ENCODE measurements at regions of chr2 and their contacts with region 1.

Region 1: DNA sequence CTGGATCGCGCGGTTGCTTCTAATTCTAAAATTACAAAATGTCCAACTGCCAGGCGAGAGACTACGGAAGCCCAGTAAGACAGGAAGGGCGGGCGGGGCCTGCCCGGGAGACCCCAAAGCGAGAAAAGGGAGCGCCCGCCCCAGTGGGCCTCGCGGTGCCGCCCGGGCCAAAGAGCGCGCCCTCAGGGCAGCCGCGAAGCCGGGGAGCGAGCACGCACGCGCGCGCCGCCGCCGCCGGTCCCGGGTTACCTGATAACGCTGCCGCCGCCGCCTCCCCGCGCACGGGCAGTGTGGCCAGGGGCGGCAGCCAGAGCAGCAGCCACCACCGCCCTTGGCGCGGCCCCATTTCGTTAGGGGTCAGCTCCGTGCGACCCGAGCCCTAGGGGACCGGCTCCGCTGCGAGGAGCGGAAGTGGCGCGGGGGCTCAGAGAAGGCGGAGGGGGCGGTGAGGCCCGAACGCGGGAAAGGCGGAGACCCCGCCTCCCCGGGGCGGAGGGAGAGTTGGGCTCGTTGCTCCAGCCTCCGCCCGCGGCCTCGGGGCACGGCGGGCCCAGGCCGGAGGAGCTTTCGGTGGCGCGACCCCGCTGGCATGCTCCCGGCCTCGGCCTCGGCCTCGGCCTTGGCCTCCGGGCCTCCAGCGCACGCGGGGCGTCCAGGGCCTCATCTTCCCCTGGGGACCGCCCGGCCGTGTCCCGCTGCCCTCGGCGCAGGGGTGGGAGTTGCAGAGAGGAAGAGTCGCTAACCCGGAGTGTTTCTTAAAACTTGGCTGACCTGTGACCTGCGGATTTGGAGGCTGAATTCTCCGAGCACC is at the start of gene NEMP2:
- DNase-seq: peak; percentile 90
- ATAC-seq: peak; percentile 78
- H3K4me3 ChIP-seq: peak within 1 kb of the TSS; percentile 80 to 92 (median 83)
- H3K4me3 Mint-ChIP-seq: peak within 1 kb of the TSS; percentile 97
- H3K27ac ChIP-seq: peak within 1 kb of the TSS; percentile 94 to 95
- H3K27ac Mint-ChIP-seq: peak within 1 kb of the TSS; percentile 100
- H3K4me1 ChIP-seq: peaks cover 27 to 33% of the 10 kb centered on the region in 2 donors
- H3K4me1 Mint-ChIP-seq: peaks cover 55% of the 10 kb centered on the region
- H3K27me3 ChIP-seq: no peaks in the 10 kb centered on the region
- H3K27me3 Mint-ChIP-seq: no peaks in the 10 kb centered on the region
- CTCF ChIP-seq: no peak
- total RNA-seq, gene NEMP2: 17.3 and 22.4 TPM in 2 replicates

Region 2: DNA sequence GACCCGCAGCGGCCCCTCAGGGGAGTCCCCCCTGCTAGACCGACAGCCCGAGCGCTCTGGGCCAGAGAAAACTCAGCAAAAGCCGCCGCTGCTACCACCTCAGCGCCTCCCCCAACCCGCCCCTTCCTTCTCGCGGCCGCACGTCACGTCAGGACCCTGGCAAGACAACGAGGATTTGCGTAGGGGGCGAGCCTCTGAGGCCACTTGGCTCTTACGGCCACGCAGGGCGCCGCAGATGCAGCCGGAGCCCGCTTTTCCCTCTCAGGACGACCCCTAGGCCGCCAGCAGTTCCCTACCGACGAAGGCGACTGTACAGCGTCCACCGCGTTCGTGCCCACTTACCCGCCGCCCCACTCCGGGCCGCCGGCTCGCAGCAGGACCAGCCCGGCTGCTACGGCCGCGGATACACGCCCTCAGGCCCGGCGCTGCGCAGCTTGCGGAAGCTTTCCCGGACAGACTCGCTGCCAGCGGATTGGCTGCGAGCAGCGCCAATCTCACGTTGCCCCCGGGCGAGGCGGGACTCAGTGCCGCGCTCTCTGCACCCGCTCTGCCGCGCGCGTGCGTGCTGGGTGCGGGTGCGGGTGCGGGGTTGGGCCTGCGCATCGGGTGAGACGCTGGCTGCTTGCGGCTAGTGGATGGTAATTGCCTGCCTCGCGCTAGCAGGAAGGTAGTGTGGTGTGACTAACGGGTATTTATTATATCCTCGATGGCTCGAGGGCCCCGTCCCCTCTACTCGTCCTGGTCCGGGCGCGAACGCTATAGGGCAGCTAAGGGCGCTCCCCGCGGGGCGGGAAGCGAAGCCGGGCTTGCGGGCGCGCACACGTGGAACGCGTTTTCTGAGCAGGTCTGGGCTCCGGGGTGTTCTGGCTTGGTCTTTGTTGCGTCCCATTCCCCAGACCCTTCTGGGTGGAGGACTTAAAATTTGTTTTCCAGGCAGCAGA is 750.3 kb before region 1 on chr2 and contains the starts of genes ORMDL1 and PMS1:
- CTCF ChIA-PET with region 1: no interaction called
- POLR2A ChIA-PET with region 1: no interaction called
- intact Hi-C with region 1: loop called (anchors 5 kb)
- DNase-seq: peak; percentile 98
- ATAC-seq: peak; percentile 90
- H3K4me3 ChIP-seq: peak within 1 kb of the TSS; percentile 66 to 96 (median 79)
- H3K4me3 Mint-ChIP-seq: peak within 1 kb of the TSS; percentile 96
- H3K27ac ChIP-seq: peak within 1 kb of the TSS; percentile 83 to 84
- H3K27ac Mint-ChIP-seq: peak within 1 kb of the TSS; percentile 98
- H3K4me1 ChIP-seq: peaks cover 14 to 21% of the 10 kb centered on the region in 2 donors
- H3K4me1 Mint-ChIP-seq: peaks cover 42% of the 10 kb centered on the region
- H3K27me3 ChIP-seq: no peaks in the 10 kb centered on the region
- H3K27me3 Mint-ChIP-seq: no peaks in the 10 kb centered on the region
- CTCF ChIP-seq: no peak
- total RNA-seq, gene ORMDL1: 166 and 170 TPM in 2 replicates
- total RNA-seq, gene PMS1: 43.6 and 44.2 TPM in 2 replicates

Region 3: DNA sequence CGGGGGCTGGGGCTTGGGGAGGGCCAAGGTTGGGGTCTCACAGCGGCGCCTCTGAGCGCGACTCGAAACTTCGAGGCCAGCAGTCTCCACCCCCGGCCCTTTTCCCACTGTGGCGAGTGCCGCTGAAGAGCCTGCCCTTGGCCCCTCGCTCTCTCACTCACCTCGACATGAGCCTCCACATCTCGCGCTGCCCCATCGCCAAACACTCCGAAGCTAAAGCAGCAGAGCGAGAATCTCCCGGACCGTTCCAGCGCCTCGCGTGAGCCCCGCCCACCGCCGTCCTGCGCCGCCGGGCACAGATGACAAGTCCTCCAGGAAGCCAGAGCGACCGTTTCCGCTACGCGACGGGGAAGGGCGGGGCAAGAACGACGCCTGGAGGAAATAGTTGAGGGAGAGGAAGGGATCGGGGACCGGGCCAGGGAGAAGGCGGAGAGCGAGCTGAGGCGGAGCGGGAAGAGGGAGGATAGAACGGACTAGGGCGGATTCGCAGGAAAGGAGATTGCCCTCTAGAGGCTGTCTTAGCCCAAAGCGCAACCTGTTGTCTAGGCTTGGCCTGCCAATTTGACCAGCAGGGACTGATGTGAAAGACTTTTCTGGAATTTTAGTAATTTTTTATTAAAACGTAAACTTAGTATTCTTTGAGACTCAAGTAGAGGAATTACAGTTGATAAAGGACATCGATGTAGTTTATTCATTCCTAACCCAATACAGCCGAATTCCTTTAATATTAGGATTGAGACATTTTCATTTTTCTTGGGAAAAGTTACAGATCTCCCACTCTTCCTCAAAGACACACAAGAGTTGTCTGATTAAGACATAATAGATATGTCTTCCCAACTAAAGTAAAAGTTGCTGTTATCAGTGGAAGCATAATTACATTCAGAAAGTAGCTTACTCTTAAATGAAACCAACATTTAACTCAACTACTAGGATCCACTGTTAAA is 214.7 kb before region 1 on chr2 and contains the start of gene HIBCH:
- CTCF ChIA-PET with region 1: no interaction called
- POLR2A ChIA-PET with region 1: interaction called, 3 read pairs
- intact Hi-C with region 1: loop called (anchors 10 kb)
- DNase-seq: peak; percentile 85
- ATAC-seq: peak; percentile 94
- H3K4me3 ChIP-seq: peak within 1 kb of the TSS; percentile 73 to 87 (median 79)
- H3K4me3 Mint-ChIP-seq: peak within 1 kb of the TSS; percentile 95
- H3K27ac ChIP-seq: peak within 1 kb of the TSS; percentile 80 to 84
- H3K27ac Mint-ChIP-seq: peak within 1 kb of the TSS; percentile 95
- H3K4me1 ChIP-seq: peaks cover 20 to 26% of the 10 kb centered on the region in 2 donors
- H3K4me1 Mint-ChIP-seq: peaks cover 42% of the 10 kb centered on the region
- H3K27me3 ChIP-seq: no peaks in the 10 kb centered on the region
- H3K27me3 Mint-ChIP-seq: peaks cover 8% of the 10 kb centered on the region
- CTCF ChIP-seq: peak; percentile 77
- total RNA-seq, gene HIBCH: 30.2 and 36.9 TPM in 2 replicates

Region 4: DNA sequence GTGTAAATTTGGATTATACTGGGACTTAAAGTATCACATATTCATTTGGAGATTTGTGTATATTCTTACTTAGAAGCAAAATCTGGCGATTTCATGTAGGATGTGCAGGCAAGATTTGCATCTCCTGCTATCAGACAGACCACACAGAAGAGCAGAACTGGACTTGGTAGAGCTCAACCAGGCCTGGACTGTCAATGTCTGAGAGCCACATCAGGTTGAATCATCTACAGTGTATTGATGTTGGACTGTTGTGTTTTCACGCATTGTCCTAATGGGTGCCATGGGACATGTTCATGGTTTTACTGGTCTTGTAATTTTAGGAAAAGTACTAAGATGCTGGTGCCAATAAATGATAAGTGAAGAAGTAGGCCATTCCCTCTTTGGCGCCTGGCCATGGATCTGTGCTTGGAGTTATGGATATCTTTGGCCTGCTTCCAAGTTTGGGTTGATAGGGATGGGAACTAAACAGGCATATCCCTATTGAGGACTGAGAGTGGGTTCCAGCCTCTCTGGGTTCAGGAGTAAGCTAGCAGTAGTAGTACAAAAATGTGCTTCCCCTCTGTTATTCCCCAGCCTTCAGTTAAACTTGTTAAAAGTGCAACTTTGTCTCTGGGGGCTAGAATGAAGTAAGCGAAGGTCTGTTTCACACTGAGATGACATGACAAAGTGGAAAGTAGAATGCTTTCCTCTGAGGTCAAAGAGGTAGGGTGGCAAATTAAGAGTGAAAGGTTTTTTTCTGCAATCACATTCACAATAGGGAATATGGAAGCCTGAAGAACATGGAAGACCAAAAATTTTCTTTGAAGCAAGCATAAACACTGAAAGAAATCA is 49.2 kb after region 1 on chr2:
- CTCF ChIA-PET with region 1: no interaction called
- POLR2A ChIA-PET with region 1: no interaction called
- intact Hi-C with region 1: loop called (anchors 5 kb)
- DNase-seq: no peak
- ATAC-seq: peak; percentile 33
- H3K4me3 ChIP-seq: no peak overlapping the region
- H3K4me3 Mint-ChIP-seq: peak overlapping the region; percentile 14
- H3K27ac ChIP-seq: no peak overlapping the region
- H3K27ac Mint-ChIP-seq: peak overlapping the region; percentile 15
- H3K4me1 ChIP-seq: peaks cover 1 to 17% of the 10 kb centered on the region in 2 donors
- H3K4me1 Mint-ChIP-seq: peaks cover 15% of the 10 kb centered on the region
- H3K27me3 ChIP-seq: no peaks in the 10 kb centered on the region
- H3K27me3 Mint-ChIP-seq: no peaks in the 10 kb centered on the region
- CTCF ChIP-seq: no peak

Region 5: DNA sequence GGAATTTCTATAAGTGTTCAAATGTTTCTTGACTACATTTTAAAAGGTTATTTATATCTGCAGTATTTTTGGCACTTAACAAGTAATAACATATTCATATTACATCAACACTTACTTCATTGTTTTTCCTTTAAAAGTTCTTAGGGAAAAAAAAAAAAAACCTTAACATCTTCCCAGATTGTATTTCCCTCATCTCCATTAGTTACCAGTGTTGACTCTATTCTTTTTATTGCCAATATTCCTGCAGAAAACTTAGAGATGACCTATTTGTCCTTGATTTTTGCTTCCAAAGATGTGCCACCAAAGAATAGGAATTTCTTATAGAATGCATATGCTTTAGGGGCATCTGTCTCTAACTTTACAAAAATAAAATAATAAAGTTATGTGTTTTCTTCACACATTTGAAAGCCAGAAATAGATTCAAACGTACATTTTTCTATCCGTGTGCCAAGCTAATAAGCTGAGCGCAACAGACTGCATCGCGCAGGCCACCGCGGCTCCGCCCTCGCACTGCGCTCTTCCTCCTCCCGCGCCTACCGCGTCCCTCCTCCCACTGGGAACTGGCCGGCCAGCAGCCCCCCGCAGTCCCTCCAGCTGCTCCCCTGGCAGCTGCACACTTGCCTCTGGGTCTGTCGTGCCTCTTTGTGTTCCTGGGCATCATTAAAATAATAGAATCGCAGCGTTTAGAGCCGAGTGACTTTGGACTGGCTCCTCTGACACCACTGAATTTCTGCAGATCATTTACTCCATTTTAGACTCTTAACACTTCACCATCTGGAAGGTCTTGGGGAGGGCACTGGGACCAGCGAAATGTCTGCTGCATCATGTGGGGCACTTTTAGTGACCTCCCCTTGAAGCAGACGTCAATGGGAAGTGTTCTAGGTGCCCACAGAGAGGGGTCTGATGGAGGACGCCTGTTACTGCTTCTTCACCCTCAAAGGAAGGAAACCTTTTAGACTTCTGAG is 93.2 kb after region 1 on chr2:
- CTCF ChIA-PET with region 1: no interaction called
- POLR2A ChIA-PET with region 1: no interaction called
- intact Hi-C with region 1: no loop called
- DNase-seq: no peak
- ATAC-seq: peak; percentile 49
- H3K4me3 ChIP-seq: peak overlapping the region in 4 of 5 experiments; percentile 21 to 51 (median 43)
- H3K4me3 Mint-ChIP-seq: peak overlapping the region; percentile 88
- H3K27ac ChIP-seq: no peak overlapping the region
- H3K27ac Mint-ChIP-seq: peak overlapping the region; percentile 43
- H3K4me1 ChIP-seq: peaks cover 5 to 6% of the 10 kb centered on the region in 2 donors
- H3K4me1 Mint-ChIP-seq: peaks cover 8% of the 10 kb centered on the region
- H3K27me3 ChIP-seq: peaks cover 0 to 10% (median 0%) of the 10 kb centered on the region in 4 experiments
- H3K27me3 Mint-ChIP-seq: peaks cover 27% of the 10 kb centered on the region
- CTCF ChIP-seq: no peak

Region 6: DNA sequence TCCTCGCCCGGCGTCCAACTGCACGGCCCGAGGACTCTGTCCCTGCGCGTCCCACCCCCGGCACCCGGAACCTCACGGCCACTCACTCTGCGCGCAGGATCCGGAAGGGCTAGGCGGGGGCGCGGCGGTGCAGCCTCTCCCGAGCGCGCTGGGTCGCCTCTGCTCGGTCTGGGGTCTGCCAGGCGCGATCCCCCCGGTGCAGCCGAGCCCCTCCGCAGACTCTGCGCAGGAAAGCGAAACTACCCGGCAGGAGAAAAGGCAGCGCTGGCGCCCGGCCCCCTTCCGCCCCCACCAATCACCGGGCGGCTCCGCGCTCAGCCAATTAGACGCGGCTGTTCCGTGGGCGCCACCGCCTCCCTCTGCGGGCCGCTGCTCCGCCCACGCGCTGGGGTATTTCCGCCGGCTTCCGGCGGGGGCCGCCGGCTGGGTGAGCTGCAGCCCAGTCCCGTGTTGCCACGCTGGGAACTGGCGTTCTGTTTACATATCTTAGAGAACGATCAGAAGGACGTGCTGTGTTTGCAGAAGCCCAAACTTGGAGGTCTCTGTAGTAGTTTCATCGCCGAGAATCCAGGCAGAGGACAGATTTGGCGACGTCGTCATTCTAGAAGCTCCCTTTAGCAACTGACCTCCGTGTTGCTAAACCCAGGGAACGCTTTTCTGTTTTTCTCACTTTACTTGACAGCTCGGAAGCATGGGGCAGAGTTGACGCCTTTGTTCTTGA is 479.6 kb after region 1 on chr2 and contains the start of gene STAT1:
- CTCF ChIA-PET with region 1: interaction called, 3 read pairs
- POLR2A ChIA-PET with region 1: no interaction called
- intact Hi-C with region 1: loop called (anchors 1 kb)
- DNase-seq: peak; percentile 96
- ATAC-seq: peak; percentile 93
- H3K4me3 ChIP-seq: peak within 1 kb of the TSS; percentile 81 to 96 (median 92)
- H3K4me3 Mint-ChIP-seq: no peak within 1 kb of the TSS
- H3K27ac ChIP-seq: peak within 1 kb of the TSS; percentile 84 to 93
- H3K27ac Mint-ChIP-seq: no peak within 1 kb of the TSS
- H3K4me1 ChIP-seq: peaks cover 35 to 42% of the 10 kb centered on the region in 2 donors
- H3K4me1 Mint-ChIP-seq: peaks cover 23% of the 10 kb centered on the region
- H3K27me3 ChIP-seq: no peaks in the 10 kb centered on the region
- H3K27me3 Mint-ChIP-seq: no peaks in the 10 kb centered on the region
- CTCF ChIP-seq: no peak
- total RNA-seq, gene STAT1: 50.9 and 53.8 TPM in 2 replicates

Measured in B cell (primary cell).